Activated naive CD4-positive, alpha-beta T cell treated with anti-CD3 and anti-CD28 coated beads, Interleukin-2, amount 10 ng/mL, durations not matched to agents 7 days and 5 days (primary cell): ENCODE measurements at regions of chr14 and their contacts with region 1.

Region 1: GRCh38 chr14:69129264-69129880 is 23.5 kb downstream of the DCAF5 start:
- DNase-seq: peak; percentile 78
- H3K4me3 Mint-ChIP-seq: no peak overlapping the region
- H3K27ac Mint-ChIP-seq: no peak overlapping the region
- H3K4me1 Mint-ChIP-seq: peaks cover 18% of the 10 kb centered on the region
- H3K27me3 Mint-ChIP-seq: no peaks in the 10 kb centered on the region

Region 2: DNA sequence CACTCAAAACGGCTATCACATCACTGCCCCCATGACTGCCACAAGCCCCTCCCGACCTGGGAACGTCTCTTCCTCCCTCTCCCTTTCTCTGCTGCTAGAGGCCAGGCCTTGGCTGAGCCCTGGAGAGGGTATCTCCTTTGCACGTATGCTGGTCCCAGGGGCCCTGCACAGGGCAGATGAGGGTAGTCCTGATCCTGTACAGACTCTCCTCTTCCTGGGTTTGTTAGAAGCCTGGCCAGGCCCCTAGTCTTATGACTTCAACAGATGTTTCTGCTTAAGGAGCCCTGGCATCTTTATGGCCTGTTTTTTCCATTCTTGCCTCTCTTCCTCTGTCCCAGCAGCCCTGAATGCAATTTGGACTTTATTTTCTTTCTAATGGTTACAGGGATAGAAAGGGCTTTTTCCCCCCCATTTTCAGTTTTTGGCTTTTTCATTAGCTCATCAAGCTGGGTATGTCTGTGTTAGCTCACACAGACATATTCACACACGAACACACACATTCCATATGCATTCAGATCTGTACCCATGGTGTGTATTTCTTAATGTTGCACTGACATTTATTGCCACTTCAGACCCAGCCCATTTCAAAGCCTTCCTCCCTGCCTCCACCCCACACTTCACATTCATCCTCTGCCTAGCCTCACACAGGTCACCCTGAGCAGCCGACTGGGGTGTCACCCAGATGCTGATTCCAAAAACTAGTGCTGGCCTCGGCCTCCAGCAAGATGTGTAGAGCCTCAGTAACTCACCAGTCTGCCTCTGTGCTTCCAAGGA is 539.7 kb before region 1 on chr14:
- CTCF ChIA-PET with region 1: no interaction called
- DNase-seq: no peak
- H3K4me3 Mint-ChIP-seq: no peak overlapping the region
- H3K27ac Mint-ChIP-seq: no peak overlapping the region
- H3K4me1 Mint-ChIP-seq: peaks cover 14% of the 10 kb centered on the region
- H3K27me3 Mint-ChIP-seq: no peaks in the 10 kb centered on the region

Region 3: GRCh38 chr14:69027242-69027913 is 102.0 kb before region 1 on chr14:
- CTCF ChIA-PET with region 1: no interaction called
- DNase-seq: no peak
- H3K4me3 Mint-ChIP-seq: no peak overlapping the region
- H3K27ac Mint-ChIP-seq: no peak overlapping the region
- H3K4me1 Mint-ChIP-seq: no peaks in the 10 kb centered on the region
- H3K27me3 Mint-ChIP-seq: peaks cover 12% of the 10 kb centered on the region

Region 4: GRCh38 chr14:69117020-69117767 is 12.2 kb before region 1 on chr14:
- CTCF ChIA-PET with region 1: interaction called, 13 read pairs
- DNase-seq: no peak
- H3K4me3 Mint-ChIP-seq: no peak overlapping the region
- H3K27ac Mint-ChIP-seq: peak overlapping the region; percentile 64
- H3K4me1 Mint-ChIP-seq: peaks cover 40% of the 10 kb centered on the region
- H3K27me3 Mint-ChIP-seq: no peaks in the 10 kb centered on the region

Region 5: DNA sequence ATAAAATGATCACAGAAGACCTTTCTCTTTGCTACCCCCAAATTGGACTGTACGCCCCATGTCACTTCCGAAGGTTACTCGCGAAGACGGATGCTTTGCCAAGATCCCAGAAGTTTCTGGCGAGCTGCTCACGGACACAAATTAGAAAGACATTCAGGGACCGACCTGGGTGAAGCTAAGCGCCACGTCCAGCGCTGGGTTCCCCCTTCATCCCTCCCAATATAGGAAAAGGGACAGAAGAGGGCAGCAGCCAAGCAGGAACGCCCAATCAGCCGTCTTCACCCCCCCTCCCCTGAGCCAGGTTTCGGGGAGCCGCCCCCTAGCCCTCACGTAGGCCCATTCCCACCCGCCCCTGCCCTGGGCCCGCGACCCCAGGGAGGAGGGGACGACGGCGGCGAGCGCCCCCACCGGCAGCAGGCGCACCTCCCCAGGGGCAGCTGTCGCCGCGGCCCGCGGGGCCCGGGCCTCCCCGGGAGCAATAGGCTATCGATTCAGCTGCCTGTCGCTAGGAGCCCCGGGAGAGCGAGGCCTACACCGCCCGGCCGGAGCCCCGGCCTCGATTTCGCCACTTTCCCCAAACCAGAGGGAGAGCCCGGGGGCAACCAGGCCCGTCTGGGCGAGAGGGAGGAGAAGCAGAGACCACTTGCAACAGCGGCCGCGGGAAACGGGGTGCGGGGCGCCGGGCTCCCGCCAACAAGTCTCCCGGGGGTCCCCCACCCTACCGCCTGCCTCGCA is 22.1 kb after region 1 on chr14:
- CTCF ChIA-PET with region 1: interaction called, 14 read pairs
- DNase-seq: peak; percentile 83
- H3K4me3 Mint-ChIP-seq: peak overlapping the region; percentile 94
- H3K27ac Mint-ChIP-seq: peak overlapping the region; percentile 94
- H3K4me1 Mint-ChIP-seq: peaks cover 38% of the 10 kb centered on the region
- H3K27me3 Mint-ChIP-seq: peaks cover 29% of the 10 kb centered on the region